ENCODE measurements at regions of chr2 and their contacts with region 1.

Region 1: GRCh38 chr2:207143215-207144172 is 22.3 kb downstream of the KLF7 start:
- DNase-seq: peak; percentile 73
- ATAC-seq: peak; percentile 82
- H3K4me3 Mint-ChIP-seq: peak overlapping the region; percentile 56
- H3K27ac Mint-ChIP-seq: peak overlapping the region; percentile 92
- H3K4me1 Mint-ChIP-seq: peaks cover 54% of the 10 kb centered on the region
- H3K27me3 Mint-ChIP-seq: peaks cover 2% of the 10 kb centered on the region

Region 2: GRCh38 chr2:207156451-207157161 is 13.1 kb after region 1 on chr2:
- CTCF ChIA-PET with region 1: interaction called, 71 read pairs
- POLR2A ChIA-PET with region 1: interaction called, 28 read pairs
- DNase-seq: no peak
- ATAC-seq: peak; percentile 12
- H3K4me3 Mint-ChIP-seq: no peak overlapping the region
- H3K27ac Mint-ChIP-seq: no peak overlapping the region
- H3K4me1 Mint-ChIP-seq: peaks cover 65% of the 10 kb centered on the region
- H3K27me3 Mint-ChIP-seq: no peaks in the 10 kb centered on the region

Region 3: DNA sequence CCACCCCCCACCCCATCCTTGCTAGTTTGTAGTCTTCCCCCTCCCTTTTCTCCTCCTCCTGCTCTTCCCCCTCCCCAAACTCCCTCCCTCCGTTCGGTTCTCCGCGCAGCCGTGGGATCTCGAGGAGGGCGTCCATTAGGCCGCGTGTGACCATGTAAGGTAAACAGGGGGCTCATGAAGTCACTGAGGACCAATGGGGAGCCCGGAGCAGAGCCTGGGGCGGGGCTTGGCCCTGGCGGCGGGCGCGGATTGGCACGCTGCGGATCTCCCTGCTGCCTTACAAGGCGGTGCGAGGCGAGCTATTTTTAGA is 22.5 kb after region 1 on chr2:
- CTCF ChIA-PET with region 1: interaction called, 71 read pairs
- POLR2A ChIA-PET with region 1: interaction called, 84 read pairs
- DNase-seq: peak; percentile 98
- ATAC-seq: peak; percentile 95
- H3K4me3 Mint-ChIP-seq: peak overlapping the region; percentile 95
- H3K27ac Mint-ChIP-seq: peak overlapping the region; percentile 94
- H3K4me1 Mint-ChIP-seq: peaks cover 40% of the 10 kb centered on the region
- H3K27me3 Mint-ChIP-seq: peaks cover 3% of the 10 kb centered on the region

Region 4: GRCh38 chr2:207473049-207473930 is 329.8 kb after region 1 on chr2:
- CTCF ChIA-PET with region 1: interaction called, 25 read pairs
- POLR2A ChIA-PET with region 1: interaction called, 3 read pairs
- DNase-seq: peak; percentile 67
- ATAC-seq: peak; percentile 72
- H3K4me3 Mint-ChIP-seq: no peak overlapping the region
- H3K27ac Mint-ChIP-seq: no peak overlapping the region
- H3K4me1 Mint-ChIP-seq: peaks cover 22% of the 10 kb centered on the region
- H3K27me3 Mint-ChIP-seq: peaks cover 2% of the 10 kb centered on the region

Region 5: GRCh38 chr2:207529330-207530159 is 386.1 kb after region 1 on chr2 and contains the start of gene CREB1:
- CTCF ChIA-PET with region 1: no interaction called
- POLR2A ChIA-PET with region 1: interaction called, 10 read pairs
- DNase-seq: peak; percentile 99
- ATAC-seq: peak; percentile 90
- H3K4me3 Mint-ChIP-seq: peak within 1 kb of the TSS; percentile 90
- H3K27ac Mint-ChIP-seq: peak within 1 kb of the TSS; percentile 99
- H3K4me1 Mint-ChIP-seq: peaks cover 48% of the 10 kb centered on the region
- H3K27me3 Mint-ChIP-seq: peaks cover 15% of the 10 kb centered on the region
- total RNA-seq, gene CREB1: 87.6 to 103 TPM